Dorsolateral prefrontal cortex (tissue), 120 donors: ENCODE measurements at regions of chr5 and their contacts with region 1.

Region 1: GRCh38 chr5:138632900-138633489 is 57.8 kb upstream of the HSPA9 start:
- DNase-seq: peak; percentile 29 to 88 (median 74)
- H3K4me3 ChIP-seq: peak overlapping the region in 12 of 59 donors; percentile 2 to 35 (median 17)
- H3K27ac ChIP-seq: peak overlapping the region in 39 of 59 donors; percentile 1 to 67 (median 38)
- H3K27me3 ChIP-seq: no peaks in the 10 kb centered on the region
- CTCF ChIP-seq: peak; percentile 40 to 72 (median 61)

Region 2: DNA sequence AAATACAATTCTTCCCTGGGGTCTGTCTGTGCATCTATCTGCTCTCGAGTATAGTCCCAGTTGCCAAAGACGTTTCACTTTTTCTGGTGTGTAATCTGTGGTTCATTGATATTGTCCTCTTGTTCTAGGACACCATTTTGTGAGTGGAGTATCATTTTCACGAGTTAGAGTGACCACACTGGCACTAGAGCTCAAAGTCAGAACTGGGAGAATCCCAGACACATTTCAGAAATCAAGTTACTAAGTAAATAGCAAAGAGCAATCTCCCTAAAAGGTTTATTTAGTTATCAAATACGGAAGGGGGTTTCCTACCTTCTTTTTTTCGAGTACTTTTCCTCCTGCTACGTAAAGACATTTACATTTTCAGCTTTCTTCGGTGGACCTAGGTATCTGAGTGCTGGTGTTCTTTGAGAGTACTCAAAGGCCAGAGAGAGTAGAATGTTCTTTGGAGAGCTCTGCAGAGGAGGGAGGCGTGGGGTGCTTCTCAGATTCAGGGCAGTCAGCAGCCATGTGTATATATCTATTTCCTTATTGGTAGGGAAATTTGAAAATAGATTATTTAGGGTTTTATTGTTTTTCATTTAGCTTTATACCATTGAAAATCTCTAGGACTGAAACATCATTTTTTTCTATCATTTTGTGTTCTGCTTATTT is 48.9 kb before region 1 on chr5:
- intact Hi-C with region 1: loop called (anchors 5 kb)
- DNase-seq: no peak
- H3K4me3 ChIP-seq: no peak overlapping the region
- H3K27ac ChIP-seq: no peak overlapping the region
- H3K27me3 ChIP-seq: no peaks in the 10 kb centered on the region
- CTCF ChIP-seq: no peak

Region 3: DNA sequence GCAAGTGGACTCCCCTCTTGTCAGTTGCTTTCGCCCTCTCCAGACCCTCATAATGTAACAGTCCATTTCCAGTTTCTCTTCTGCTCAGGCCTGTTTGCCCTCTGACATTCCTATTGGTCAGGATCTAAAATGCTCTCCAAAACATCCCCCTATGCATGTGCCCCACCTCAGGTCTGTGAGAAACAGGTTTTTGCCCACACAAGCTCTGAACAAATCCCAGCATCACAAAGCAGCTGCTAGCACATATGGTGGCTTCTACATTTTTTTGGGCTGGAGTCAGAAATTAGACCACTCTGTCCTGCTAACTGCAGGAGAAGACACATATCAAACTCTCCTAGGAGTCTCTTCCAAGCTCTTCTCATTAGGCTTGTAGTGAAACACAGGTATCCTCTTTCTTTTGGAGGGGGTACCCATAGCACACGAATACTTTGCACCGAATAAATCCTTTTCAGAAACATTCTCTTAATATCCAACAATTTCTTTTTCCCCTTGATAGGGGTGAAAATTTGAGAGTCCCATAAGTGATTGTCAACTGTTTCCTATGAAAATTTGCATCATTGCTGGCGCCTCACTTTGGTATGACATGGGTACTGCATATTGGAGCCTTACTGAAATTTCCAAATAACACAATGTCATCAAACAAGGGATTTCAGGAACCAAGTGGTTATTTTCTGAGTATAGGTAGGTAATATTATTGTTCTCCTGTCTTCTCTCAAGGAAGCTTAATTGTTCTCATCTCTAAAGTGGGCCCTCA is 38.5 kb before region 1 on chr5:
- intact Hi-C with region 1: no loop called
- DNase-seq: no peak
- H3K4me3 ChIP-seq: no peak overlapping the region
- H3K27ac ChIP-seq: peak overlapping the region in 14 of 59 donors; percentile 24 to 76 (median 62)
- H3K27me3 ChIP-seq: no peaks in the 10 kb centered on the region
- CTCF ChIP-seq: peak in 19 of 56 donors; percentile 9 to 50 (median 26)